Activated CD4-positive, alpha-beta T cell treated with anti-CD3 and anti-CD28 coated beads, Interleukin-2, amount 10 ng/mL, durations not matched to agents 24 days and 14 days (primary cell): ENCODE measurements at regions of chr1 and their contacts with region 1.

Region 1: DNA sequence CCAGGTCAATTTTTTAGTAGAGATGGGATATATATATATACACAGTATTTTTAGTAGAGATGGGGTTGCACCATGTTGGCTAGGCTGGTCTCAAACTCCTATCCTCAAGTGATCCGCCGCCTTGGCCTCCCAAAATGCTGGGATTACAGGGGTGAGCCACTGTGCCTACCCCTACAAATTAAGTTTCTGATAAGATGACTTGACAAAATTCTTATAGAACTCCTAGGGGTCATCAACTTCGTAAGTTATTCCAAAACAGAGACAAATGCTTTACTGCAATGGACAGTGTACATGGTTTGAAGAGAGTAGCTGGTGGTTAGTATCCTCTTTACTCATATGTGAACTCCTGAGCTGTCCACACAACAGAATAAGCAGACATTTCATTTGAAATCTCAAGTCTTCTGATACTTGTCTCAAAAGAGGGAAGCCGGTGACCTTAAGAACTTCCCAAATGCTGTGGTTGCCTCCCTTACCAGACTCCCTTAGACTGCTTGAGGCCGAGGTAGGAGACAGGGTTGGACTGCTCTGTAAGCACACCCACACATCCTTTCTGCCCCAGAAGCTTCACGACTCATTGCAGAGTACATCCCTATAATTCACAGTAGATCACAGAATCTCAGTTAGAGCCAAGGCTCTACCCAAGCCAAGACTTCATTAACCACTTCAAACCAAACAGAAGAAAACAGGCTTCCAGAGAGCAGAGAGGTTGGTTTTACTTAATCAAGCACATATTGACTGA is 244.1 kb upstream of the IRF2BP2 start:
- DNase-seq: no peak
- H3K4me3 Mint-ChIP-seq: no peak overlapping the region
- H3K27ac Mint-ChIP-seq: peak overlapping the region; percentile 31
- H3K4me1 Mint-ChIP-seq: peaks cover 40% of the 10 kb centered on the region
- H3K27me3 Mint-ChIP-seq: no peaks in the 10 kb centered on the region

Region 2: DNA sequence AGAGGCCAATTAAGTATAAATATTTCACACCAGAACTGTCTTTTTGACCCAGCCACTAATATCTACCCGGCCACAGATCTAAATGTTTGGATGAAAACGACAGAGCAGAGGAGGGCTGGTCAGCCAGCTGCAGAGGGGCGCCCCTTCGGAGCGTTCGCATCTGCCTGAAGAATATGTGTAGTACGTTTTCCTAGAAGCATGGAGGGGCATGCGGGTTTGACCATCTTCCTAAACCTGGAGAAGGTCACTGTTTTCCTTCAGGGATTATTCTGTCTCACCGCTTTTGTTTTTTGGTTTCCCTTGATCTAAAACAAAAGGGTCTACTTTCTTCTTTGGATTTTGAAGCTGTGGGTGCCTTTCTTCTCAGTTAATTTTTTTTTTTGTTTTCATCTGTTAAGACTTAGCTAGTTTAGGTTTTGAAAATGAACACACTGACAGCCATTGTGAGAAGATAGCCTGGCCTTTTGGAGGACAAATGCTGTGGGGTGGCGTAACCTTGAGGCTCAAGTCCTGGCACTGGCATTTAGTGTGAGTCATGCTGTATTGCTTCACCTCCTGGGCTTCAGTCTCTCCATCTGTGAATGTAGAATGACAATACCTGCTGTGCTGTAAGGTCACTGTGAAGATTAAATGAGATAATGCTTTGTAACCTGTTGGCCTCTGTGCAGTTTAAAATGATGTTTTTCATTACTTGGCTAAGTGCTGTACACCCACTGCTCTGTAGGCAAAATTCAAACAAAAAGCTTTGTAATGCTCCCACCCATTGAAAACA is 170.0 kb before region 1 on chr1:
- intact Hi-C with region 1: no loop called
- DNase-seq: no peak
- H3K4me3 Mint-ChIP-seq: no peak overlapping the region
- H3K27ac Mint-ChIP-seq: no peak overlapping the region
- H3K4me1 Mint-ChIP-seq: no peaks in the 10 kb centered on the region
- H3K27me3 Mint-ChIP-seq: no peaks in the 10 kb centered on the region

Region 3: DNA sequence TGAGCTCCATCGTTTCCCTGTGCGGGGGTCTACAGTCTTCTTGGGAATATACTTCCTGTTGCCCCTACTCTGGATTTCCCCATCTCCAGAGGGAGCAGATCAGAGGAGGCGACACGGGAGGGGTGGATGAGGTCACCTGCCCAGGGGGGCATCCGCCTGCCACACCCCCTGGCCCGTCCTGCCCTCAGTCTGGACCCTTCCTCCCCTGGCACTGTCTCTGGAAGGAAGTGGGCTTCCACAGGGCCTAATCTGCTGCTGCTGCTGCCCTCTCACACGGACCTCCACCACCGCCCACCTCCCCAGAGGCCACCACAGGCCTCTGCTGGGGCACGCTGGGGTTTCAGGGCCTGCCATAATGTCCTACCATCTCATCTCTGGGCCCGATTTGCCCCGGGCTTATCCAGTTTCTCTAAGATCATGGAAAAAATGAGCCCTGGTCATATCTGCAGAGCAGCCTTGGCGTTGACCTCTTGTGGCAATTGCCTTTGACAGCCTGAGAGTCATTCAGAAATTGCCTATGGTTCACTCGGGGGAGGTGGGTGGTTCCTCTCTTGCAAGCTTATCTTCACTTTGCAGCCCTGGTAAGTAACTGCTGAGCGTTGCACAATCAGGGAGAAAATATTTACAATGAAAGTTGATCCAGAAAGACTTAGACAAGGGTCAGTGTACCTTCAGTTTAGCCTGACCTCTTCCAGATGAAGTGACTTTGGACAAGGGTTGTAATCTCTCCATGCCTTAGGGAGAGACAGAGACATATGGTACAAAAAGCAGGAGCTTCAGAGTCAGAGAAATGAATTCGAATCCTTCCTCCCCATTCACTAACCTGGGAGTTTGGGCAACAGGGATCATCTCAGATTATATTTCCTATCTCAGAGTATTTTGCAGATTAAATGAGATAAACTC is 22.1 kb after region 1 on chr1:
- intact Hi-C with region 1: loop called (anchors 2 kb)
- DNase-seq: no peak
- H3K4me3 Mint-ChIP-seq: peak overlapping the region; percentile 3
- H3K27ac Mint-ChIP-seq: peak overlapping the region; percentile 92
- H3K4me1 Mint-ChIP-seq: peaks cover 51% of the 10 kb centered on the region
- H3K27me3 Mint-ChIP-seq: no peaks in the 10 kb centered on the region